B cell (primary cell): ENCODE measurements at regions of chr2 and their contacts with region 1.

Region 1: GRCh38 chr2:205947621-205948495 is 138.1 kb downstream of the INO80D start:
- DNase-seq: peak; percentile 51
- ATAC-seq: peak; percentile 43
- H3K4me3 ChIP-seq: no peak overlapping the region
- H3K4me3 Mint-ChIP-seq: no peak overlapping the region
- H3K27ac ChIP-seq: no peak overlapping the region
- H3K27ac Mint-ChIP-seq: no peak overlapping the region
- H3K4me1 ChIP-seq: no peaks in the 10 kb centered on the region
- H3K4me1 Mint-ChIP-seq: peaks cover 3% of the 10 kb centered on the region
- H3K27me3 ChIP-seq: peaks cover 0 to 2% (median 0%) of the 10 kb centered on the region in 4 experiments
- H3K27me3 Mint-ChIP-seq: peaks cover 25% of the 10 kb centered on the region
- CTCF ChIP-seq: peak; percentile 90

Region 2: GRCh38 chr2:204260162-204260877 is 1687.5 kb before region 1 on chr2:
- CTCF ChIA-PET with region 1: interaction called, 6 read pairs
- POLR2A ChIA-PET with region 1: no interaction called
- intact Hi-C with region 1: loop called (anchors 2 kb)
- DNase-seq: peak; percentile 42
- ATAC-seq: no peak
- H3K4me3 ChIP-seq: no peak overlapping the region
- H3K4me3 Mint-ChIP-seq: no peak overlapping the region
- H3K27ac ChIP-seq: no peak overlapping the region
- H3K27ac Mint-ChIP-seq: no peak overlapping the region
- H3K4me1 ChIP-seq: no peaks in the 10 kb centered on the region
- H3K4me1 Mint-ChIP-seq: no peaks in the 10 kb centered on the region
- H3K27me3 ChIP-seq: peaks cover 0 to 12% (median 0%) of the 10 kb centered on the region in 4 experiments
- H3K27me3 Mint-ChIP-seq: peaks cover 28% of the 10 kb centered on the region
- CTCF ChIP-seq: peak; percentile 65

Region 3: DNA sequence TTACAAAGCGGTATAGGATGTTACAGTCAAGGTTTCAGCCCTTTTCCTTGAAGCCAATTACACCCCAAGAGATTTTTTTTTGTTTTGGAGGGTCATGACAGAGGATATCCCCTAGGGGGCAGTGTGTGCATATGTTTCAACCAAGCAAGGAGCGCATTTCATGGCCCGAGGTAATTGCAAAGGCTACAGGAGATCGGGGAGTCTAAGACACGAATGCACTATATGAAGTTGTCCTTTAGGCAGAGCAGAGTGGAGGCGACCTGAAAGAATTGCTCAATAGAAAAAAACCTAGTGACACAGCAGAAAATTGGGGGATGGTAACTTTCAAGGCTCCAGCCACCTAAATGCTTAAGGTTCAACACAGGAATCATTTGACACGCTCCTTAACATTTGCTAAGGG is 1622.4 kb before region 1 on chr2:
- CTCF ChIA-PET with region 1: interaction called, 28 read pairs
- POLR2A ChIA-PET with region 1: no interaction called
- intact Hi-C with region 1: loop called (anchors 1 kb)
- DNase-seq: peak; percentile 63
- ATAC-seq: no peak
- H3K4me3 ChIP-seq: no peak overlapping the region
- H3K4me3 Mint-ChIP-seq: no peak overlapping the region
- H3K27ac ChIP-seq: no peak overlapping the region
- H3K27ac Mint-ChIP-seq: no peak overlapping the region
- H3K4me1 ChIP-seq: no peaks in the 10 kb centered on the region
- H3K4me1 Mint-ChIP-seq: peaks cover 1% of the 10 kb centered on the region
- H3K27me3 ChIP-seq: no peaks in the 10 kb centered on the region
- H3K27me3 Mint-ChIP-seq: peaks cover 5% of the 10 kb centered on the region
- CTCF ChIP-seq: peak; percentile 83

Region 4: DNA sequence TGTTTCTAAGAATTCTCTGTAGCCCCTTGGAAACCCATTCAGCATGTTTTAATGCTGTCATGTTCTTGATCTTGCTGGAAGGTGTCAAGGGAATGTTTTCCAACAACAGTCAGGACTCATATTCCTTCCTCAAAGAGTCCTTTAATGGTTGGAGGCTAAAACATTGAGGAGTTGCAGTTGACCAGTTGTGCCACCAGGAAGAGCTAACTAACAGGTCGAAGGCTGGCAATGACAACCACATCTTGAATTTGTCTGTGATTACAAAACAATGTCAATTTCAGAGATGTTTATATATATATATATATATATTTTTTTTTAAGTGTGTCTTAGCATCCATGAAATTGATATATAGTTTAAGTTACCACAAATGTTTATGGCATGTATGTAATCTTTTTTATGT is 13.4 kb before region 1 on chr2:
- CTCF ChIA-PET with region 1: interaction called, 18 read pairs
- POLR2A ChIA-PET with region 1: no interaction called
- intact Hi-C with region 1: no loop called
- DNase-seq: no peak
- ATAC-seq: no peak
- H3K4me3 ChIP-seq: no peak overlapping the region
- H3K4me3 Mint-ChIP-seq: no peak overlapping the region
- H3K27ac ChIP-seq: no peak overlapping the region
- H3K27ac Mint-ChIP-seq: no peak overlapping the region
- H3K4me1 ChIP-seq: no peaks in the 10 kb centered on the region
- H3K4me1 Mint-ChIP-seq: no peaks in the 10 kb centered on the region
- H3K27me3 ChIP-seq: peaks cover 0 to 2% (median 0%) of the 10 kb centered on the region in 4 experiments
- H3K27me3 Mint-ChIP-seq: peaks cover 4% of the 10 kb centered on the region
- CTCF ChIP-seq: no peak

Region 5: DNA sequence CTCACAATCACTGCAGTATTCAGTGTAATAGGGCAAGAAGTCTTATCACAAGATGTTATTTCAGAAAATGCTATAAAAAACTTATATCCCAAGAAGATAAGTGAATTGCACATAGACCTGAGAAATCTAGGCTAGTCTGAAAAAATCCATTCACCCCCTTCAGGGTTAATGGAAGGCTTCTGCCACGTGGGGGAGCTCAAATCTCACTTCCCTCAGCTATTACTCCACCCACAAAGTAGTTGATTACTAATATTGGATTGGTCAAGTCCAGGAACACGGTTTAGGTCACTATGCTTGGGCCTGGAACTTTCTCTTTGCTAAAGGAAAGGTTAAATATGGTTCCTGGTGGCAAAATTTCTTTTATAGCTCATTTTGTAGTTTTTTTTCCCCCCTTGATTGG is 444.3 kb after region 1 on chr2:
- CTCF ChIA-PET with region 1: no interaction called
- POLR2A ChIA-PET with region 1: no interaction called
- intact Hi-C with region 1: no loop called
- DNase-seq: peak; percentile 21
- ATAC-seq: no peak
- H3K4me3 ChIP-seq: no peak overlapping the region
- H3K4me3 Mint-ChIP-seq: no peak overlapping the region
- H3K27ac ChIP-seq: no peak overlapping the region
- H3K27ac Mint-ChIP-seq: no peak overlapping the region
- H3K4me1 ChIP-seq: no peaks in the 10 kb centered on the region
- H3K4me1 Mint-ChIP-seq: no peaks in the 10 kb centered on the region
- H3K27me3 ChIP-seq: no peaks in the 10 kb centered on the region
- H3K27me3 Mint-ChIP-seq: no peaks in the 10 kb centered on the region
- CTCF ChIP-seq: peak; percentile 39